Heart right ventricle (tissue), 16 donors: ENCODE measurements at regions of chr11 and their contacts with region 1.

Region 1: GRCh38 chr11:12784987-12785386 is 110.8 kb downstream of the TEAD1 start:
- DNase-seq: peak in 1 of 2 donors; percentile 26
- ATAC-seq: peak in 6 of 8 donors; percentile 24 to 74 (median 54)
- H3K4me3 ChIP-seq: no peak overlapping the region
- H3K27ac ChIP-seq: no peak overlapping the region
- H3K4me1 ChIP-seq: peaks cover 0 to 30% (median 14%) of the 10 kb centered on the region in 9 donors
- H3K27me3 ChIP-seq: no peaks in the 10 kb centered on the region
- CTCF ChIP-seq: no peak

Region 2: DNA sequence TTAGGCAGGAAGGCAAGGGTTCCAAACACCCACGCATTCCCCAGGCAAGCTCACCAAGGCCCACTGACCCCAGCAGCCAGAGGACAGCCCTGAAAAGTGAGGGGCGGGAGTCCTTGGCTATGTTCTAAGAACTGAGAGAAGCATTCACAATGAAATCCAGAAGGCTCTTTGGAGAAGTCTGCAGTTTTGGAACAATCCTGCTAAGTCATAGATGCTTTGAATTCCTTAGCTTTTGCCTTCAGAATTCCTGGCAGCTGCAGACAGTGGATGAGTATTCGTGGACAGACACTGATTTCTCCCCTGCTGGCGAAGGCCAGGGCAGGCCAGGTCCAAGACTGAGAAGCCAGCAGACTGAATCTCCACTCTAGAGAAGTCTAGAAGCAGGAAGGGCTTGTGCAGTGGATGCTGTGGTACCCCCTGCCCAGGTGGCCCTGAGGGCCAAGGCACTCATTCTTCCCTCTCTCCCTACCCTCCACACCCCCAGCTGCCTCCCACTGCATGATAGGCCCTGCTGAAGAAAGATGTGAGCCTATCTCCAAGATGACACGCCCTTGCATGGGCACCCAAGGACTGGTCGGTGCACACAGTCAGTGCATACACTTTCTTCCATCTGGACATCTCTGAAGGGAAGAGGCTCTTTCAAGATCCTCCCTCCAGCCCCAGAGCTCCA is 243.9 kb before region 1 on chr11:
- intact Hi-C with region 1: no loop called
- DNase-seq: no peak
- ATAC-seq: peak in 6 of 8 donors; percentile 15 to 55 (median 34)
- H3K4me3 ChIP-seq: no peak overlapping the region
- H3K27ac ChIP-seq: no peak overlapping the region
- H3K4me1 ChIP-seq: peaks cover 3 to 27% (median 15%) of the 10 kb centered on the region in 9 donors
- H3K27me3 ChIP-seq: no peaks in the 10 kb centered on the region
- CTCF ChIP-seq: no peak

Region 3: GRCh38 chr11:12731841-12732336 is 53.1 kb before region 1 on chr11:
- intact Hi-C with region 1: loop called in 1 of 10 experiments (anchors 5 kb)
- DNase-seq: no peak
- ATAC-seq: no peak
- H3K4me3 ChIP-seq: no peak overlapping the region
- H3K27ac ChIP-seq: no peak overlapping the region
- H3K4me1 ChIP-seq: peaks cover 0 to 53% (median 18%) of the 10 kb centered on the region in 9 donors
- H3K27me3 ChIP-seq: no peaks in the 10 kb centered on the region
- CTCF ChIP-seq: no peak